Heart left ventricle (tissue), 16 donors: ENCODE measurements at regions of chr3 and their contacts with region 1.

Region 1: GRCh38 chr3:54515441-54516213 is 393.3 kb downstream of the CACNA2D3 start:
- DNase-seq: no peak
- ATAC-seq: no peak
- H3K4me3 ChIP-seq: no peak overlapping the region
- H3K27ac ChIP-seq: no peak overlapping the region
- H3K4me1 ChIP-seq: no peaks in the 10 kb centered on the region
- H3K27me3 ChIP-seq: no peaks in the 10 kb centered on the region
- CTCF ChIP-seq: peak in 1 of 12 donors; percentile 12
- POLR2A ChIP-seq: no peak

Region 2: DNA sequence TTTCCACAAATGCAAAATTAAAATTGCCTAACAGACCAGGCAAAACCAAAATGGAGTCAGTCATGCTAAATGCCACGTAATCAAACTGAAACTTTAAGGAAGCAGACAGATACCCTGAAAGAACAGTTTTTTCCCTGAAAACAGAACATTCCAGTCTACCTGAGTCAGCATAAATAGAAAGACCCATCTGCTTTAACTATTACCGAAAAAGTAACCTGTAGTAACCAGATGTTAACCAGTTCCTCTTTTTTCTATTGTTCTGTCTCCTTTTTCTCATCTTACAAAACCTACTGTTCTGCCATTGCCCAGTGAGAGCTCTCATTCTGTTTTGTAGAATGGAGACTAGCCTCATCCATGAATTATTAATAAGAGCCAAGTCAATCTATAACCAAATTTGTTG is 107.3 kb before region 1 on chr3:
- intact Hi-C with region 1: loop called in 1 of 10 experiments (anchors 5 kb)
- DNase-seq: no peak
- ATAC-seq: no peak
- H3K4me3 ChIP-seq: no peak overlapping the region
- H3K27ac ChIP-seq: no peak overlapping the region
- H3K4me1 ChIP-seq: no peaks in the 10 kb centered on the region
- H3K27me3 ChIP-seq: no peaks in the 10 kb centered on the region
- CTCF ChIP-seq: no peak
- POLR2A ChIP-seq: no peak